ENCODE measurements at regions of chr3 and their contacts with region 1.

Region 1: DNA sequence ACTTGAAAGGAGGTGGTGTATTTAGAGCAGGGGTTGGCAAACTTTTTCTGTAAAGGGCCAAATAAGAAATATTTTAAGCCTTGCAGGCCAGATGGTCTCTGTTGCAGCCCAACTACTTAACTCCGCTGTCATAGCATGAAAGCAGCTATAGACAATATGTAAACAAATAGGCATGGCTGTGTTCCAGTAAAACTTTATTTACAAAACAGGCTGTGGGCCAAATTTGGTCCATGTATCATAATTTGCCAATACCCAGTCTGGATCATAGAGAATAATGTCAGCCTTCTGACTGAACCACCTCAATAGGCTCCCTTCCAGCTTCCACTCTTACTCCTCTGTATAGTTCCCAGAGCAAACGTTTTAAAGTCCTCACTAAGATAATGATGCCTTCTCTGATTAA is 638.8 kb upstream of the CFAP20DC start:
- DNase-seq: no peak
- ATAC-seq: no peak
- H3K4me3 ChIP-seq: no peak overlapping the region
- H3K4me3 Mint-ChIP-seq: no peak overlapping the region
- H3K27ac ChIP-seq: no peak overlapping the region
- H3K27ac Mint-ChIP-seq: no peak overlapping the region
- H3K4me1 ChIP-seq: no peaks in the 10 kb centered on the region
- H3K4me1 Mint-ChIP-seq: peaks cover 0 to 2% (median 0%) of the 10 kb centered on the region in 3 donors
- H3K27me3 ChIP-seq: peaks cover 0 to 2% of the 10 kb centered on the region in 2 experiments
- H3K27me3 Mint-ChIP-seq: no peaks in the 10 kb centered on the region

Region 2: GRCh38 chr3:60046210-60046609 is 357.6 kb after region 1 on chr3:
- CTCF ChIA-PET with region 1: no interaction called
- POLR2A ChIA-PET with region 1: no interaction called
- DNase-seq: no peak
- ATAC-seq: no peak
- H3K4me3 ChIP-seq: no peak overlapping the region
- H3K4me3 Mint-ChIP-seq: peak overlapping the region in 1 of 3 donors; percentile 19
- H3K27ac ChIP-seq: no peak overlapping the region
- H3K27ac Mint-ChIP-seq: peak overlapping the region; percentile 2 to 36
- H3K4me1 ChIP-seq: peaks cover 15 to 17% of the 10 kb centered on the region in 2 experiments
- H3K4me1 Mint-ChIP-seq: peaks cover 44 to 77% (median 52%) of the 10 kb centered on the region in 3 donors
- H3K27me3 ChIP-seq: no peaks in the 10 kb centered on the region
- H3K27me3 Mint-ChIP-seq: no peaks in the 10 kb centered on the region

Region 3: DNA sequence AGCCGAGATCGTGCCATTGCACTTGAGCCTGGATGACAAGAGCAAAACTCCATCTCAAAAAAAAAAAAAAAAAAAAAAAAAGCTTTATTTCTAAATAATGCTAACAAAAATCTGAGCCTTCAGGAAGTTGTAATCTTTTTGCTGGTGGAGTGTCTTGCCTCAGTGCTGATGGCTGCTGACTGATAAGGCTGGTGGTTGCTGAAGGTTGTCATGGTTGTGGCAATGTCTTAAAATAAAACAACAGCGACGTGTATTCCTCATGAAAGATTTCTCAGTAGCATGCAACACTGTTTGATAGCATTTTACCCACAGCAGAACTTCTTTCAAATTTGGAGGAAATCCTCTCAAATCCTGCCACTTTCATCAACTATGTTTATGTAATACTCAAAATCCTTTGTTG is 1795.4 kb after region 1 on chr3:
- CTCF ChIA-PET with region 1: no interaction called
- POLR2A ChIA-PET with region 1: interaction called in 1 of 2 experiments, 18 read pairs
- DNase-seq: peak in 1 of 35 experiments; percentile 9
- ATAC-seq: peak in 1 of 4 experiments; percentile 42
- H3K4me3 ChIP-seq: no peak overlapping the region
- H3K4me3 Mint-ChIP-seq: no peak overlapping the region
- H3K27ac ChIP-seq: no peak overlapping the region
- H3K27ac Mint-ChIP-seq: peak overlapping the region in 1 of 2 donors; percentile 53
- H3K4me1 ChIP-seq: peaks cover 0 to 8% of the 10 kb centered on the region in 2 experiments
- H3K4me1 Mint-ChIP-seq: peaks cover 0 to 4% (median 3%) of the 10 kb centered on the region in 3 donors
- H3K27me3 ChIP-seq: no peaks in the 10 kb centered on the region
- H3K27me3 Mint-ChIP-seq: peaks cover 0 to 6% of the 10 kb centered on the region in 2 donors